Activated CD4-positive, alpha-beta T cell treated with anti-CD3 and anti-CD28 coated beads for 36 hours (primary cell): ENCODE measurements at regions of chr13 and their contacts with region 1.

Region 1: DNA sequence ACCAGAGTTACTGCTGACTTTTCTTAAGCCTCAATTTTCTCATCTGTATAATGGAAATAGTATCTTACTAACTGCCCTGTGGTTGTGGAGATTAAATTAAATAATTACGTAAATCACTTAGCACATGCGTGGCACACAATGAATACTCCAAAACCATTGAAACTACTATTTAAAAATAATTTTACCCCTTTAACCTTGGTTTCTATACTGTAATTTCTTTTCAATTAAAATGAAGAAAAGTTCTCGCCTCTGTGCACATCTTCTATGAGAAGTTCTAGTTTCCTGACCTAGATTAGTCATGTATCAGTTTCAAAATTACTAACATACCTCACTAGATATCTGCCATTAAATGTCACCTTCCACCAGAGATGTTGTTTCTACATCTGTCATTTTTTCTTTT is 5.7 kb downstream of the SLITRK1 start:
- DNase-seq: no peak
- ATAC-seq: peak; percentile 84
- H3K4me3 Mint-ChIP-seq: no peak overlapping the region
- H3K27ac Mint-ChIP-seq: no peak overlapping the region
- H3K4me1 Mint-ChIP-seq: peaks cover 20% of the 10 kb centered on the region
- H3K27me3 Mint-ChIP-seq: peaks cover 35% of the 10 kb centered on the region

Region 2: GRCh38 chr13:84137292-84137691 is 260.7 kb after region 1 on chr13:
- CTCF ChIA-PET with region 1: no interaction called
- POLR2A ChIA-PET with region 1: no interaction called
- intact Hi-C with region 1: loop called in 1 of 2 experiments (anchors 5 kb)
- DNase-seq: peak; percentile 74
- ATAC-seq: peak; percentile 99
- H3K4me3 Mint-ChIP-seq: no peak overlapping the region
- H3K27ac Mint-ChIP-seq: peak overlapping the region; percentile 1
- H3K4me1 Mint-ChIP-seq: peaks cover 18% of the 10 kb centered on the region
- H3K27me3 Mint-ChIP-seq: no peaks in the 10 kb centered on the region